ENCODE measurements at regions of chr2 and their contacts with region 1.

Region 1: GRCh38 chr2:120892967-120893667 is 157.4 kb downstream of the GLI2 start:
- DNase-seq: no peak
- H3K4me3 Mint-ChIP-seq: no peak overlapping the region
- H3K27ac Mint-ChIP-seq: no peak overlapping the region
- H3K4me1 Mint-ChIP-seq: peaks cover 14% of the 10 kb centered on the region
- H3K27me3 Mint-ChIP-seq: no peaks in the 10 kb centered on the region
- CTCF ChIP-seq: no peak

Region 2: GRCh38 chr2:120489023-120489422 is 404.1 kb before region 1 on chr2:
- CTCF ChIA-PET with region 1: no interaction called
- intact Hi-C with region 1: no loop called
- DNase-seq: no peak
- H3K4me3 Mint-ChIP-seq: no peak overlapping the region
- H3K27ac Mint-ChIP-seq: no peak overlapping the region
- H3K4me1 Mint-ChIP-seq: no peaks in the 10 kb centered on the region
- H3K27me3 Mint-ChIP-seq: peaks cover 74% of the 10 kb centered on the region
- CTCF ChIP-seq: no peak

Region 3: GRCh38 chr2:120913972-120914838 is 21.1 kb after region 1 on chr2:
- CTCF ChIA-PET with region 1: interaction called, 10 read pairs
- intact Hi-C with region 1: no loop called
- DNase-seq: no peak
- H3K4me3 Mint-ChIP-seq: no peak overlapping the region
- H3K27ac Mint-ChIP-seq: peak overlapping the region; percentile 83
- H3K4me1 Mint-ChIP-seq: peaks cover 64% of the 10 kb centered on the region
- H3K27me3 Mint-ChIP-seq: no peaks in the 10 kb centered on the region
- CTCF ChIP-seq: no peak

Region 4: DNA sequence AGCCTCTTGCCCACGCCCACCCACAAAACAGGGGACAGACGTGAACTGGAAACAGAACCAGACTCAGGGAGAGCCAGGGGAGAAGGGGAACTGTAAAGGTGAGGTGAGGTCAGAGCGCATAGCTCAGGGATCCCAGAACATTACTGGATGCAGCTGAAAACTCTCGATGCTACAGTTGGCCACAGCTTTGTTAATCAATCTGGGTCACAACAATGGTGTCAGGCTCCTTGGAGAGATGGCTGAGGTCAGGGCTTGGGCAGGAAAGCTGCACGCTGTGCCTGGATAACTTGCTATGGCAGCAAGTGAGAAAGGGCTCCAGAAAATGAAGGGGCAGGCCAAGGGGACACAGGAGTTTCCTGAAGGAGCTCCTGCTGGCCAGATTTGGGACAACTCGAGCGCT is 128.6 kb after region 1 on chr2:
- CTCF ChIA-PET with region 1: no interaction called
- intact Hi-C with region 1: no loop called
- DNase-seq: no peak
- H3K4me3 Mint-ChIP-seq: no peak overlapping the region
- H3K27ac Mint-ChIP-seq: no peak overlapping the region
- H3K4me1 Mint-ChIP-seq: no peaks in the 10 kb centered on the region
- H3K27me3 Mint-ChIP-seq: peaks cover 40% of the 10 kb centered on the region
- CTCF ChIP-seq: no peak

Region 5: DNA sequence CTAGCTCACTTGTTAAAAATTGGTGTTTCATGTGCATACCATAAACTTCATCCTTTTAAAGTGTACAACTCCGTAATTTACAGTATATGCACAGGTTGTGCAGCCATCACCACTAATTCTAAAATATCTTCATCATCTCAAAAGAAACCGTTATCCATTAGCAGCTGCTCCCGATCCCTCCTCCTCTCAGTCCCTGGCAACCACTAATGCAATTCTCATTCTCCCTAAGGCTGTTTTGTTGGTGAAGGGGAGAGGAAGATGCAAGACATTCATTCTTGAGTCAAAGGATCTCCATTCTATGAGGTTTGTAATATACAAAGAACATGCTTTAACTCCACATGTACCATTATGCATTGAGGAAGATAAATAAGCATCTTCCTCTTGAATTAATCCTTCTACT is 686.2 kb after region 1 on chr2:
- CTCF ChIA-PET with region 1: interaction called, 13 read pairs
- intact Hi-C with region 1: no loop called
- DNase-seq: no peak
- H3K4me3 Mint-ChIP-seq: no peak overlapping the region
- H3K27ac Mint-ChIP-seq: no peak overlapping the region
- H3K4me1 Mint-ChIP-seq: peaks cover 9% of the 10 kb centered on the region
- H3K27me3 Mint-ChIP-seq: no peaks in the 10 kb centered on the region
- CTCF ChIP-seq: no peak

Measured in Calu3 (cell line).